Caki2 (cell line): ENCODE measurements at regions of chr4 and their contacts with region 1.

Region 1: DNA sequence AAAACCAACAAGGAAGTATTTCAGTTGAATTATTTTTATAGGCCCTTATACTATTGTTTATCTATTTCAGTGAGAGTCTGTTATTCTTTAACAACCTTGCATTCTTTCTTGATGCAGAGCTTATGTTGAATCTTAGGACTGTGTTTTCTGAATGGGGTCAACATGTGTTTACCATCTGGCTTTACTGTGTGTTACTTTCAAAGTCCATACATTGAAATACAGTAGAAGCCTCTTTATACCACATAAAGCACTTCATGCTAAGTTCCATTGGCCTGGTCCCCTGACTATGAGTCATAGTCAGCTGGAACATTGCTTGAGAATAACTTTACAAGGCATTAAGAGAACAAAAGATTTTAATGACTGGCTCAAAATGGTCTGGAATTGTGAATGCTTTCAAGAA is 152.6 kb downstream of the GASK1B start:
- DNase-seq: peak; percentile 87

Region 2: DNA sequence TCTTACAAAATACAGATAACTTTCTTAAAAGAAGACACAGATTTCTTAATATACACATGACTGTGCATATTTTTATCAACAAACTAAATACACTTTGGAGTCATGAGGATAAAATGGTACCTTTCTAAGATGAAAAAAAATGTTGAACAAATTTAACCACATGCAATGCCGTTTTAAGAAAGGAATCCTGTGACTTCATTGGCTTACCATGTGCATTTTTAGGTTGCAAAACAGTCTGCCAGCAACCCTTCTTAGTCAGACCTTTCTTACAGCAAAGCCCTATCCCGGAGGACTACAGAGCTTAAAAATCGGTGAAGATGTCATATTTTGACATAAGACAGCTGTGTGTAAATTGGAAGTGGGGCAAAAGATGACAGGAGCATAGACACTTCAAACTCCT is 101.0 kb after region 1 on chr4:
- in situ Hi-C with region 1: no loop called
- DNase-seq: peak; percentile 33

Region 3: DNA sequence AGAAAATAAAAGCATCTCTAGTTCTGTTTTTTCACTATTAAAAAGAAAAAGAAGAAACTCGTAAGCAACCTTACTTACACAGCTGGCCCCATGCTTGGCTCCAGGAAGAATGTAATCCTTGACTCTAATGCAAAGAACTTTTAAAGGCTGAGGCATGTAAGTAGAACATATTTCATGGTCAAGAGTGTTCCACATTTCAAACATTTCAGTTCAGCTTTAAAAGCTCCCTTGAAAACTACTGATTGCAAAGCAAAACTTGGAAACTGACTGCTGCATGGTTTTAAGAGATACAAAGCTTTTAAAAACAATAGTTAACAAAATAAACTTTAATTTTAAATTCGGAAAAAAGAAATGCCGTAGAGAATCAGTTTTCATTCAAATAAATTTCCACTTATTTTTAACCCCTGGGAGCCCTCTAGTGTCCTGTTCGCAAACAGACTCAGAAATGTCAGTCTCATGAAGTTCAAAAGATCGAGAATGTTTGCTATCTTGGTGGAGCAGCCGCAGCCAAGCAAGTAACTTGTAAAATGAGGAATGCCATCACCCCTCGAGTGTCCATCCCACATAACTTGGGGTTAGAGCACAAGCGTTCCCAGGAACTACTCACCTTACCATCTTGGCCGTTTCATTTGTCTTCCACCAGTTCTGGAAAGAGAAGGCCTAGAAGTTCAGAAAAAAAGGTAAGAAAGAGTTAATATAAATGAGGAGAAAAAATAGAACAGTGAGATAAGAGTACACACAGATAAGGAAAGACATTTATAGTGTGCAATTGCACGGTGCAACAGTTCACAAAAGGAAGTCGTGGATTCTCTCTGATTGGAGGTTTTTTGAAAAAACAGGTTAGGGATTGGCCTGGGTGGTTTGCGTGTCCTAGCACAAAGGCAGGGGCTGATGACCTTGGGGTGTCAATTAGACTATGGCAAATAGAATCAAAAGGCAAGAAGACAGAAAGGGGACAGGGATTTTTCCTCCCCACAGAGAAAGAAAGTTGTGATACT is 152.4 kb after region 1 on chr4 and contains the start of gene GASK1B:
- in situ Hi-C with region 1: loop called (anchors 25 kb)
- DNase-seq: peak; percentile 76
- total RNA-seq, gene GASK1B: 44.9 and 84.5 TPM in 2 replicates